ENCODE measurements at regions of chr3 and their contacts with region 1.

Region 1: DNA sequence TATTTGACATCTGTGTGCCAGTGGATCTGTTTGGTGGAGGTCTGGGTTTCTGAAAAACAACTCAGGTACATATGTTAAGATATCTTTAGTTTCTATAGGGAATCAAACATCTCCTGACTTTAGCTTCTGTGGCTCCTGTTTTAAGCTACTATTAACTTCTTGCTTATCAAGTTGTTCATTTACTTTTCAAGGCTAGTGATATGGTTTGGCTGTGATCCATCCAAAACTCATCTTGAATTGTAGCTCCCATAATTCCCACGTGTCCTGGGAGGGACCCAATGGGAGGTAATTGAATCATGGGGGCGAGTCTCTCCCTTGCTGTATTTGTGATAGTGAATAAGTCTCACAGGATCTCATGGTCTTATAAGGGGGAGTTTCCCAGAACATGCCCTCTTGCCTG is 41.4 kb downstream of the ZNF860 start:
- DNase-seq: no peak
- ATAC-seq: no peak

Region 2: GRCh38 chr3:32143849-32144757 is 121.2 kb after region 1 on chr3:
- intact Hi-C with region 1: loop called (anchors 5 kb)
- DNase-seq: no peak
- ATAC-seq: peak; percentile 68